ENCODE measurements at regions of chr14 and their contacts with region 1.

Region 1: DNA sequence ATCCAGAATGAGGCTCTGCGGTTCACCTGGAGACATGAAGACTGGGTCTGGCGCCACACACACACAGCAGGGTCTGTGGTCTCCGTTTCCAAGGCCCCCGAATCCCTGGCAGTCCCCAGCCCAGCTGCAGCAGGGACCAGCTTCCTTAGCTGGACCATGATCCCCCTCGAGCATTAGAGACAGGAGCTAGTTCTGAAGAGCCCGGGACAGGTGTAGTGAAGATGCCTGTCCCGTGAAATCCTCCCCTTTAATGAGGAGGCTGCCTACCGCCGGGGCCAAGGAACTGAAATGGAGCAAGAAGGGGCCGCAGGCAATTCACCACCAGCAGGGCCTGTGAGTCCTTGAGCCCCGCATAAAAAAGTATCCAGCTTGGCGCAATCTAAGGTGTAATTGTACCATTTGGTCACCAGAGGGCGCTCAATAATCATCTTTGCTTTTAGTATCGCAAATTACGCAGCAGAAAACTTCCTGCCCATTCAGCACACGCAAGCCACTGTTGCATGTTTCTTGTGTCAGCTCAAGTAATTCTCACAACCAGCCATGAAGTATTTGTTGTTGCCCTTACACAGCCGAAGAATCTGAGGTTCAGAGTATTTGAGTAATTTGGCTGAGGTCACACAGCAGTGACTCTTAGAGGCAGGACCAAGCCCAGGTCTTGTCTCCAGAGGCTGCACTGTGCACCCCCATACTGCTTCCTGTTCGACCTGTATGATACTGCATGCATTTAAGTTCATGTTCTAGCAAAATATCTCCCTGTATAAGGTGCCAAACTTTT is 54.3 kb upstream of the PPP2R5C start:
- DNase-seq: peak; percentile 43
- ATAC-seq: peak; percentile 68
- H3K4me3 ChIP-seq: no peak overlapping the region
- H3K27ac ChIP-seq: no peak overlapping the region
- H3K4me1 ChIP-seq: no peaks in the 10 kb centered on the region
- H3K27me3 ChIP-seq: no peaks in the 10 kb centered on the region
- CTCF ChIP-seq: peak; percentile 78

Region 2: GRCh38 chr14:101225450-101226152 is 481.7 kb before region 1 on chr14:
- CTCF ChIA-PET with region 1: no interaction called
- POLR2A ChIA-PET with region 1: no interaction called
- in situ Hi-C with region 1: no loop called
- intact Hi-C with region 1: no loop called
- DNase-seq: no peak
- ATAC-seq: no peak
- H3K4me3 ChIP-seq: no peak overlapping the region
- H3K27ac ChIP-seq: no peak overlapping the region
- H3K4me1 ChIP-seq: 0 out of 2 replicates have a peak, but pooled peaks cover 2% of the 10 kb centered on the region
- H3K27me3 ChIP-seq: no peaks in the 10 kb centered on the region
- CTCF ChIP-seq: no peak

Region 3: GRCh38 chr14:101947906-101948665 is 240.8 kb after region 1 on chr14:
- CTCF ChIA-PET with region 1: no interaction called
- POLR2A ChIA-PET with region 1: no interaction called
- in situ Hi-C with region 1: no loop called
- intact Hi-C with region 1: loop called (anchors 10 kb)
- DNase-seq: peak; percentile 98
- ATAC-seq: peak; percentile 98
- H3K4me3 ChIP-seq: peak overlapping the region; percentile 64 to 85
- H3K27ac ChIP-seq: peak overlapping the region; percentile 96
- H3K4me1 ChIP-seq: peaks cover 3% of the 10 kb centered on the region
- H3K27me3 ChIP-seq: no peaks in the 10 kb centered on the region
- CTCF ChIP-seq: no peak

Measured in Panc1 (cell line).